Left ventricle myocardium superior (tissue), 1 donor: ENCODE measurements at regions of chr3 and their contacts with region 1.

Region 1: GRCh38 chr3:73624821-73625665 is at the start of gene PDZRN3:
- DNase-seq: peak; percentile 82
- ATAC-seq: peak; percentile 43
- total RNA-seq, gene PDZRN3: 147 TPM

Region 2: DNA sequence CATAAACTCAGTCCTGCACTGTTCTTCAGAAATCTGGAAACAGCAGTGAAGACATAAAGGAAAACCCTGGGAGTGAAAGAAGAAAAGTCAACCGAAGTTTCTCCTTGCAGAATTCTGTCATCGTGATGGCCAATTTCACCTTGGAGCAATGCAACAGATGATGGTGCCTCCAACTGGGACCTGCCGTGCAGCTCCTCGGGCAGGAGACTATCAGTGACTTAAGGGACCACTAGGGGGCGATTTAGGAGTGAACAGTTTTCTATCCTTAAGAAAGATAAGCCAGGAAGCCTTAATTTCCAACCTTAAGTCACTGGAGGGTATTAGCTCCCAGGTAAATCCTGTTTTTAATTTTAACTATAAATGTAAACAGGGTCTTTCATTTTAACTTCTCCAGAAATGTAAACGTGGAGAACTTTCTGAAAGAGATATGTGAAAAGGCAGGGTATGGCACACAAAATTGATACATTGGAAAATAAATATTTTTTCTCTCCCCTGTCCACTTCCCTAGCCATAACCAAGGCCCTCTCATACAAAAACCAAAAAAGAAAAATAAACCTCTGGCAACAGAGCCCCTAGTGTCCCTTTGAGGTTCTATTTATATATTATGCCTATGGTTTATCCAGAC is 116.6 kb before region 1 on chr3:
- intact Hi-C with region 1: loop called (anchors 2 kb)
- DNase-seq: no peak
- ATAC-seq: peak; percentile 66